Activated CD4-positive, alpha-beta T cell treated with anti-CD3 and anti-CD28 coated beads for 36 hours (primary cell): ENCODE measurements at regions of chr12 and their contacts with region 1.

Region 1: GRCh38 chr12:48157018-48157888 is at the start of gene ASB8:
- DNase-seq: peak; percentile 100
- ATAC-seq: peak; percentile 96
- H3K4me3 Mint-ChIP-seq: peak within 1 kb of the TSS; percentile 88
- H3K27ac Mint-ChIP-seq: peak within 1 kb of the TSS; percentile 94
- H3K4me1 Mint-ChIP-seq: peaks cover 40% of the 10 kb centered on the region
- H3K27me3 Mint-ChIP-seq: no peaks in the 10 kb centered on the region
- total RNA-seq, gene ASB8: 28.8 to 33.0 TPM

Region 2: GRCh38 chr12:48105862-48106680 is 51.2 kb before region 1 on chr12 and contains the start of gene SENP1:
- CTCF ChIA-PET with region 1: interaction called, 12 read pairs
- POLR2A ChIA-PET with region 1: interaction called, 8 read pairs
- intact Hi-C with region 1: loop called (anchors 1 kb)
- DNase-seq: peak; percentile 94
- ATAC-seq: peak; percentile 87
- H3K4me3 Mint-ChIP-seq: peak within 1 kb of the TSS; percentile 95
- H3K27ac Mint-ChIP-seq: peak within 1 kb of the TSS; percentile 98
- H3K4me1 Mint-ChIP-seq: peaks cover 46% of the 10 kb centered on the region
- H3K27me3 Mint-ChIP-seq: no peaks in the 10 kb centered on the region
- total RNA-seq, gene SENP1: 44.4 to 61.8 TPM

Region 3: GRCh38 chr12:48119078-48119833 is 38.0 kb before region 1 on chr12 and contains the start of gene PFKM:
- CTCF ChIA-PET with region 1: interaction called, 4 read pairs
- POLR2A ChIA-PET with region 1: interaction called, 5 read pairs
- intact Hi-C with region 1: loop called in 1 of 2 experiments (anchors 1 kb)
- DNase-seq: peak; percentile 86
- ATAC-seq: peak; percentile 100
- H3K4me3 Mint-ChIP-seq: peak within 1 kb of the TSS; percentile 93
- H3K27ac Mint-ChIP-seq: peak within 1 kb of the TSS; percentile 89
- H3K4me1 Mint-ChIP-seq: peaks cover 16% of the 10 kb centered on the region
- H3K27me3 Mint-ChIP-seq: peaks cover 5% of the 10 kb centered on the region
- total RNA-seq, gene PFKM: 53.2 to 79.6 TPM

Region 4: GRCh38 chr12:48183091-48183875 is 26.0 kb after region 1 on chr12 and contains the start of gene CCDC184:
- CTCF ChIA-PET with region 1: interaction called, 4 read pairs
- POLR2A ChIA-PET with region 1: no interaction called
- intact Hi-C with region 1: loop called (anchors 1 kb)
- DNase-seq: peak; percentile 78
- ATAC-seq: peak; percentile 80
- H3K4me3 Mint-ChIP-seq: peak within 1 kb of the TSS; percentile 81
- H3K27ac Mint-ChIP-seq: peak within 1 kb of the TSS; percentile 31
- H3K4me1 Mint-ChIP-seq: peaks cover 20% of the 10 kb centered on the region
- H3K27me3 Mint-ChIP-seq: peaks cover 34% of the 10 kb centered on the region
- total RNA-seq, gene CCDC184: 0.25 to 0.37 TPM